ENCODE measurements at regions of chr17 and their contacts with region 1.

Region 1: GRCh38 chr17:42112552-42113176 is at the start of gene DHX58:
- DNase-seq: no peak
- H3K4me3 ChIP-seq: no peak within 1 kb of the TSS
- H3K4me1 ChIP-seq: no peaks in the 10 kb centered on the region
- H3K27me3 ChIP-seq: no peaks in the 10 kb centered on the region

Region 2: DNA sequence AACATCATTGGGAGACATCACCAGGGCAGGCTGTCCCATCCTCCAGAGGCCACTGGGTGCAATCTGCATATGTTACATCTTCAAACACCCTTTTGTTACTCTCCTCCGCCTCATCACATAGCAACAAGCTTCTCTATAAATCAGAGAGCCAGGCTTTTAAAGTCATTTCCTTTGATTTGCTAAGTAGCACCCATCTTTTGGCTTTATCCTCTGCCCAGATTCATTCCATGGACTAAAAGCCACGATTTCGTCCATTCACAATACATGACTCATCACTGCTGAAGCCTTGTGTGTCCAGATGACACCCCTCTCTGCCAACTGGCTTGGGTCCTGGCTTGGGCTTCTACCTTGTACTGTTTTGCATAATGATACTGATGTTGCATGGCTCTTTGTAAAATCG is 669.9 kb before region 1 on chr17:
- in situ Hi-C with region 1: no loop called
- DNase-seq: no peak
- H3K4me3 ChIP-seq: no peak overlapping the region
- H3K4me1 ChIP-seq: no peaks in the 10 kb centered on the region
- H3K27me3 ChIP-seq: peaks cover 2% of the 10 kb centered on the region; the same call in 1 of the 2 replicates

Region 3: DNA sequence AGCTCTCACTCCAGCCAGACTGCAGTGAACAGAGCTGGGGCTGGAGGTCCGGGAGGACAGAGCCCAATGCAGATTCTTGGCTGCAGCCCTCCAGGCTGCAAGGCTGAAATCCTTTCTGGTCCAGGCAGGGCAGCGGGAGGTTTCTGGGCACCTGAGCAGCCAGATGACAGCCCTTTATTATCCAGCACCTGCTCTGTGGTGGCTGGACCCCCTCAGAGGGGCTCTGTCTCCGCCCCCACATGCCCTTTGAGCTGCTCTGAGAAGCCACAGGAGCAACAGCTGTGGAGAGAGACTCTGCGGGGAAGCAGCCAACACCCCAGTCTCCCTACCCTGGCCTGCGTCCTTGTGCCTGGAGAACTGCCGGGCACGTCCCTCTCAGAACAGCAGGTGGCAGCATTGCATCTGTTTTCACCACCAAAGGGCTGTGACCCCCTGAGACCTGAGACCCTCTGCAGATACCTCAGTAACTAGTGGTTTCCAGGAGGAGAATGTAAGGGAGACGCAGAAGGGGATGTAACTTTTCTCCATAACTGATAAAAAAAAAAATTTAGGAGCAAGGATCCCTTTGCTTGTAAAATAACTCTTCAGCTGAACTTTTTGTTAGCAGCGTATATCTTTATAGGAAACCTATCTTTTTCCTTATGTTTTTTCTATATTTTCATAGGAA is 149.8 kb before region 1 on chr17:
- in situ Hi-C with region 1: loop called (anchors 5 kb)
- DNase-seq: peak; percentile 68 to 88
- H3K4me3 ChIP-seq: no peak overlapping the region
- H3K4me1 ChIP-seq: peaks cover 3% of the 10 kb centered on the region
- H3K27me3 ChIP-seq: no peaks in the 10 kb centered on the region

Region 4: DNA sequence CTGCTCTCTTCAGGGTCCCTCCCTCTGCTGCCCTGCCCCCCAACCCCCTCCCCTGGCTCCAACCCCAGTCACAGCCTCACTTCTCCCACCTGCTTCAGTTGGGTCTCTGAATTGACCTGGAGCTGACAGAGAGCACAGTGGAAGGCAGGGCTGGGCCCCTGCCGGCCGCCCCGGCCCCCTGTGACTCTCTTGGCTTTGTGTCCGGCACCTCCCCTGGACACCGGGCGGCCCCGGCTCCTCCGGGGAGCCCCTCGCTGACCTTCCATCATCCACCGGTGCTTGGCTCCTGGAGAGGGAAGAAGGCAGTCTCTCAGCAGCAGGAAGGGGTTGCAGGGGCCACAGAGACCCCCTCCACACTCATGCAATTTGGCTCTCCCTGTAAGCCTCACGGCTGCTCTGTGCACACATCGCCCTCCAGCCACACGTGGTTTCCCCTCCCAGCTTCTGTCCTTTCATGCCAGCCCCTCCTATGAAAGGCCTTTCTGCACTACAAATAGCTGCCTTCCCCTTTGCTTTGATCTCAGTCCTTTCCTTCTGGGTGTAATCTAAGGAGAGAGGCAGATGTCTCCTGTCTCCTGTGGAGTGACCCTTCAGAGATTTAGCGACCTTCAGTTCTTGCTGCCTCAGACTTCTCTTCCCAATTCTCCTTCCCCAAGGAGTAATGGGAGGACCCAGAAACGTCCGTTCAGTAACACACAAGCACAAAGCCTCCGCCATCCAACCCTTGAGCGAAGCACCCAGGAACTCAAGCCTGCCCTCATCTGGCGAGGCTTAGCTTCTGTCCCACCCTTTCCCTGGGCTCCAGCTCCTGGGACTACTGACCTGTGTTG is 84.5 kb before region 1 on chr17:
- in situ Hi-C with region 1: loop called (anchors 5 kb)
- DNase-seq: peak in 1 of 2 experiments; percentile 45
- H3K4me3 ChIP-seq: no peak overlapping the region
- H3K4me1 ChIP-seq: no peaks in the 10 kb centered on the region
- H3K27me3 ChIP-seq: no peaks in the 10 kb centered on the region

Measured in HAP-1 (cell line).